ENCODE measurements at regions of chr6 and their contacts with region 1.

Region 1: DNA sequence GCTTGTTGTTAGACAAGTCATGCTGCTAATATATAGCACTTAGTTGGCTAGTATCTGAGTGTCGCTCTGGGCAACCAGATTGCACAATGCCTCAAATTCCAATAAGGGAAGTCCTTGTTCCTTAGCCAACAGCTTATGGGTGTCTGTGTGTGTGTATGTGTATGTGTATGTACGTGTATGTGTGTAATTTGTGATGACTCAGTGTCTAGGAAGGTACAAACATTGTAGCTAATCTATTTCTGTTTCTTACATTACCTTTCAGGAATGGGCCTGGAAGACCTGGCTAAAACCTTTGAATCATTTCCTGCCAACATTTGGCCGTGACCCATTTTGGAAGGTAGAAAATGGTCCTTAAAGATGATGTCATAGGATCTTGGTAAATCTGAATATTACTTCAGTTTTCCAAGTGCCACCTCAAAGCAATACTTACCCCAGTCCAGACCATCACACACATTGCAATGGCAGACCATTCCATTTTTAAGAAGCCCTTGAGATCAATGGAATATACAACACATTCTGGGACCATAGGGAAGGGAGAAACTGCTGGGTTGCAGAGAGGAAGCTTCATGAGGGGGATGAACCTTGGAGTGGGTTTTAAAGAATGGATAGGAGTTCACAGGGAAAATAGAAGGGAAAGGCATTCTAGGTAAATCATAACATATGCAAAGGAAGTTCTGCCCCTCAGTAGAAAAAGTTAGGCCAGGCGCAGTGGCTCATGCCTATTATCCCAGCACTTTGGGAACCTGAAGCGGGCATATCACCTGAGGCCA is 25.1 kb downstream of the NEDD9 start:
- DNase-seq: peak; percentile 98
- ATAC-seq: peak; percentile 85
- H3K4me3 ChIP-seq: peak overlapping the region; percentile 56; the same call in 1 of the 2 replicates
- H3K27ac ChIP-seq: peak overlapping the region; percentile 97
- H3K4me1 ChIP-seq: peaks cover 46% of the 10 kb centered on the region
- H3K27me3 ChIP-seq: no peaks in the 10 kb centered on the region
- CTCF ChIP-seq: no peak

Region 2: DNA sequence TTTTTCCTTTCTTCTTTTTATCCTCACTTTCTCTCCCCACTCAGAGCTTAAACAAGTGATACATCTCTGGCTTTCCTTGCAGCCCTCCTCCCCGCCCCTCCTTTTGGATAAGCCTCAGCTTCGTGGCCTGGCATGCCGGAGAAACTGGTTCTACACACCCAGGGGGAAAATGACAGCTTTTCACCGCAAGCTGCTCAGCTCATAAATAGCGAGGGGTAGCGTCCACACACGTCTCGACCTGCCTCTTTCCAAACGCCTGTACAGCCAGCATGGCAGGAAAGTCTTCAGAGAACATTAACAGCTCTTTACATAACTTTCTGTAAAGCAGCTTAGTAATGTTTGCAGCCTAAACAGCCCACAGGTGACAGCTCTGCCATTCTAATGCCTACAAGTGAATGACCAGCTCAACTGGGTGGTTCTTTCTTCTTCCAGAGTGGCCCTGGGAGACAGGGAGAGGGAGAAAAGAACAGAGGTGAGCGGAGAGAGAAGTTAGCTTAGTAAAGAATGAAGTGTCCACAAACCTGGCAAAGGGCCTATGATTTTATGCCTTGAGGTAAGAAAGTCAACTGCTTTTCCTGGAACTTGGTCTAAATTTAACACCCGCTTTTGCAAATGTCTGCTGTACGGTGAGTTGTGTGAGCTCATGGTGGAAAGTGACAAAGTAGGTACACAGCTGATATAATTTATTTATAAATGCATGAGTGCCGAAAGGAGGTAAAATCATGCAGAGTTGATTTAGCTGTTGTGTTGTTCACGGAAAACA is 1044.0 kb before region 1 on chr6:
- CTCF ChIA-PET with region 1: no interaction called
- POLR2A ChIA-PET with region 1: no interaction called
- intact Hi-C with region 1: no loop called
- DNase-seq: peak; percentile 83
- ATAC-seq: peak; percentile 37
- H3K4me3 ChIP-seq: peak overlapping the region; percentile 54
- H3K27ac ChIP-seq: peak overlapping the region; percentile 65
- H3K4me1 ChIP-seq: peaks cover 21% of the 10 kb centered on the region
- H3K27me3 ChIP-seq: no peaks in the 10 kb centered on the region
- CTCF ChIP-seq: no peak

Region 3: GRCh38 chr6:11120271-11121005 is 86.9 kb before region 1 on chr6:
- CTCF ChIA-PET with region 1: no interaction called
- POLR2A ChIA-PET with region 1: no interaction called
- intact Hi-C with region 1: no loop called
- DNase-seq: peak; percentile 90
- ATAC-seq: peak; percentile 69
- H3K4me3 ChIP-seq: peak overlapping the region; percentile 11; the same call in 1 of the 2 replicates
- H3K27ac ChIP-seq: peak overlapping the region; percentile 33
- H3K4me1 ChIP-seq: peaks cover 27% of the 10 kb centered on the region
- H3K27me3 ChIP-seq: no peaks in the 10 kb centered on the region
- CTCF ChIP-seq: no peak

Region 4: DNA sequence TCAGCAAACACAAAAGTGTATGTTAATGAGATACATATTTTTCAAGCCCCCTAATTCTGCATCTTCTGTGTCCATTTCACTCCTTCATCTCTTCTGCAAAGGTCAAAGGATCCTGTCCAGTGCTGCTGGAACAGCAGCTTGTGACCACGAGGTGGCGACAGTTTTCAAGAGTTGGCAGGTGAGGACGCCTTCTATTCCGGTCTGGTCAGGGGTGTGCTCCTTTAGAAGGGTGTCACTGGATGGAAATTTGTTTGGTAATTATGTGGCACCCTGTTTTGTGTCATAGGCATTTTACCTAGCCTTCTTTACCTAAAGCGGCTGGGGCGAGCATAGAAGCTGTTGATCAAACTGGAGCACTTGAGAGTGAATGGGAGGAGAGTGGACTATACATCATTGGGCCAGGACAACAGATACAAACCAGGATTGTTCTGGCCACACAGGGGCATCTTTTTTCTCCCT is 63.0 kb before region 1 on chr6:
- CTCF ChIA-PET with region 1: no interaction called
- POLR2A ChIA-PET with region 1: no interaction called
- intact Hi-C with region 1: loop called (anchors 1 kb)
- DNase-seq: peak; percentile 86
- ATAC-seq: peak; percentile 92
- H3K4me3 ChIP-seq: no peak overlapping the region
- H3K27ac ChIP-seq: no peak overlapping the region
- H3K4me1 ChIP-seq: peaks cover 15% of the 10 kb centered on the region
- H3K27me3 ChIP-seq: no peaks in the 10 kb centered on the region
- CTCF ChIP-seq: peak; percentile 99

Region 5: GRCh38 chr6:11188161-11188915 is 19.0 kb before region 1 on chr6:
- CTCF ChIA-PET with region 1: no interaction called
- POLR2A ChIA-PET with region 1: interaction called, 5 read pairs
- intact Hi-C with region 1: loop called (anchors 1 kb)
- DNase-seq: peak; percentile 92
- ATAC-seq: peak; percentile 94
- H3K4me3 ChIP-seq: 0 out of 2 replicates have a peak overlapping the region, but pooled peaks have one; percentile 11
- H3K27ac ChIP-seq: peak overlapping the region; percentile 66
- H3K4me1 ChIP-seq: peaks cover 17% of the 10 kb centered on the region
- H3K27me3 ChIP-seq: no peaks in the 10 kb centered on the region
- CTCF ChIP-seq: no peak

Region 6: DNA sequence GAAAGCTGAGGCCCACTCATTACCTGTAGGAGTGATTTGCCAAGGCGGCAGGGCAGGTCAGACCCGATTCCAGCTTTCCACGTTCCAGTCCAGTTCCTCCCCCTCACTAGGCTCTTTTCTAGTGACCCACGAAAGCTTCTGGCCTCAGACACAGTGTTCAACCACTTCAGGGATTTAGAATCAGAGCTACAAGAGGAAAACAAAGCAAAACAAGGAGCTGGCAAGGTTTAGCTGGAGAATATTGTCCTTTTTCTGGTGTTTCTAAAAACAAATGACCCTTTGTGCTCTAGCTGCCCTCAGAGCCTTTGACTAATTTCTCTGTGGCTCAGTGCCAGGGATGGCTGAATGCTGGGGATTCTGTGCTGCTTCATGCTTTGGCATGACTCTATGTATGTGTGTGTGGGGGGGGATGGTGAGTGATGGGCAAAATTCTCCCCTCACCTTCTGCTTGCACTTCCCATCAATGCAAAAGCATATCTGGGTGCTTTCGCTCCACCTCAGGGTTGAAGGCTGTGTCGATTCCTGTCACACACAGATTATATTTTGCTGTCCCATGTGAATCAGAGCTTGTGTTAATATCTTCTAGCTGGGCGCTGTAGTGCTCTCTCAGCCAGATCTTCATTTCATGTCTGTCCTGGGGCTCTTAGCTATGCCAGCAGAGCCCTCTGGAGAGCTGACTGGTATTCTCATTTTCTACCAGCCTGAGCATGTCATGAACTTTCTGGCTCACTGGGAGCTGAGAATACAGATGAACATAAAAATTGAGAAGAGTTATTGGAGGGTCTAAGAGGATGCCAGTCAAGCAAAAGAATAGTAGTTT is 44.4 kb after region 1 on chr6:
- CTCF ChIA-PET with region 1: no interaction called
- POLR2A ChIA-PET with region 1: interaction called, 3 read pairs
- intact Hi-C with region 1: loop called (anchors 1 kb)
- DNase-seq: peak; percentile 86
- ATAC-seq: peak; percentile 63
- H3K4me3 ChIP-seq: no peak overlapping the region
- H3K27ac ChIP-seq: peak overlapping the region; percentile 74
- H3K4me1 ChIP-seq: peaks cover 39% of the 10 kb centered on the region
- H3K27me3 ChIP-seq: no peaks in the 10 kb centered on the region
- CTCF ChIP-seq: no peak

Region 7: GRCh38 chr6:11434565-11435326 is 227.4 kb after region 1 on chr6:
- CTCF ChIA-PET with region 1: no interaction called
- POLR2A ChIA-PET with region 1: interaction called, 3 read pairs
- intact Hi-C with region 1: loop called (anchors 1 kb)
- DNase-seq: peak; percentile 97
- ATAC-seq: peak; percentile 85
- H3K4me3 ChIP-seq: no peak overlapping the region
- H3K27ac ChIP-seq: peak overlapping the region; percentile 98
- H3K4me1 ChIP-seq: peaks cover 53% of the 10 kb centered on the region
- H3K27me3 ChIP-seq: no peaks in the 10 kb centered on the region
- CTCF ChIP-seq: no peak

Measured in PC-3 (cell line).